ENCODE measurements at regions of chr17 and their contacts with region 1.

Region 1: DNA sequence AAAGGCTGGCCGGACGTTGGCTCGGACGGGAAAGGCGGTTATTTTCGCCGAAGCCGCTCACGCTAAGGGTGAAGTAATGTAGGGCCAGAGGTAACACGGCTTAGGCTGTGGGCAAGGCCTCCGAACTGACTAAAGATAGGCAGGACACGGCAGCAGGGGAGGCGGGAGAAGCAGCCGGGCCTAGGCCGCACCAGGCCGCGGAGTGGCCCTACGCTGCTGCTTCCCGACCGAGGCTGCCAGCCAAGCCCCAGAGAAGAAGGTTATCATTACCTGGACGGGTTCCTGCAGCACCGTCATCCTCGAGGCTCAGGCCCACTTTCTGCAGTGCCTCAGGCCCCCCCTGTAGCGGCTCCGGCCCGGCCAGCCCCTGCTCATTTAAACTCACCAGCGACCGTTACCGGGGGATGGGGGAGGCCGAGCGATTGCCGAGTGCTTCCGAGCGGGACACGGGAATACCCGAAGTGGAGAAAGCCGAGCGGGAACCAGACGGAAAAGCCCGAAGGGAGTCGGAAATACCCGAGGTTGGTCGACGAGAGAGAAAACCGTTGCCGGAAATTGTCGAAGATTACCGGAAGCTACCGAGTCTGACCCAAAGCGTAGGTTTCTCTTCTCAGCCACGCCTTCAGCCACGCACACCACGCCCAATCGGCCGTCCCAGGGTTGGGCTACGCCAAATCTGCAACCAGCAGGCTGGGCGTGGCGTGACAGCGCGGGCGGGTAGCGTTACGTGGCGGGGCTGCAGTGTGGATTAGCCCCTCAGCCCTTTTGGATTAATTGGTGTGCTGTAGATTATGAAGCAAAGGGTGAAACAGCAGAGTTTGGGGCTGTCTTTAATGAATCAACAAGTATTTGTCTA is at the start of gene CDC27:
- DNase-seq: peak; percentile 100
- H3K4me3 Mint-ChIP-seq: peak within 1 kb of the TSS; percentile 84
- H3K27ac Mint-ChIP-seq: peak within 1 kb of the TSS; percentile 91
- H3K4me1 Mint-ChIP-seq: peaks cover 34% of the 10 kb centered on the region
- H3K27me3 Mint-ChIP-seq: no peaks in the 10 kb centered on the region
- total RNA-seq, gene CDC27: 105 to 117 TPM

Region 2: DNA sequence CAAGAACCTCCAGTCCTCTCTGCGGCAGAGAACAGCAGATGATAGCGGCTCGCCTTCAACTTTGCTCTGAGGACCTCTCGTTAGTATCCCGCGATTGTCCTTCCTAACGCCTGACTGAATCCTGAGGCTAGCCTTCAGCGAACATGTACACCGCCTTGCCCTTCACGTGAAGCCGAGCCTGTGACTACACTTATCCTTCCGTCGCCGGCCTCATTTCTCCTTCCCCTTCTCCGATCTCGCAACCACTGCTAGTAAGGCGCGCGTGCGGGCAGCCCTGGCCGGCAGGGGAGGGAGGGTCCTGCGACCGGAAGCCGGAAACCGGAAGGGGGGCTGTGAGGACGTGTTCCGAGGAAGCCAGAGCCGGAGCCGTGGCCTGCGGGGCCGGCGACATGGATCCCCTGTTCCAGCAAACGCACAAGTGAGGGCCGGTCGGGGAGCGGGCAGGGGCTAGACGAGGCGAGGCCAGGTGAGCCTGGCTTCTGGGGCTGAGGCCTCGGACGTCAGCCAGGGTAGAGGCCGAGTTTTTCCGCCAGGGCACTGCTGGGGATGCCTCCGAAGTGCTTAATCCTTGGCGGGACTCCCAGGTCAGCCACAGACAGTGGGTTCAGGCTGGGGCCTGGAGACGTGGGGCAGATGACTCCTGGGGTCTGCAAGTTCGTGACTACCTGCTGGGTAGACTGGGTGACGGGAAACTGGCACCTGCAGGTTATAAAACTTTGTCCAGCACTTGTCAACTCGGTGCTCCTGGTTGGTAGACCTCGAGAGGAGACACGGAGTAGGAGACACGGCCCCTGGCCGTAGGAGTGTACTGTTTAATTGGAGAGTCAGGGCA is 266.1 kb before region 1 on chr17 and contains the start of gene GOSR2:
- CTCF ChIA-PET with region 1: no interaction called
- intact Hi-C with region 1: loop called (anchors 10 kb)
- DNase-seq: peak; percentile 92
- H3K4me3 Mint-ChIP-seq: peak within 1 kb of the TSS; percentile 96
- H3K27ac Mint-ChIP-seq: peak within 1 kb of the TSS; percentile 99
- H3K4me1 Mint-ChIP-seq: peaks cover 49% of the 10 kb centered on the region
- H3K27me3 Mint-ChIP-seq: no peaks in the 10 kb centered on the region
- total RNA-seq, gene GOSR2: 32.8 to 38.1 TPM

Region 3: GRCh38 chr17:47099987-47100711 is 89.0 kb before region 1 on chr17:
- CTCF ChIA-PET with region 1: no interaction called
- intact Hi-C with region 1: loop called (anchors 1 kb)
- DNase-seq: peak; percentile 96
- H3K4me3 Mint-ChIP-seq: peak overlapping the region; percentile 100
- H3K27ac Mint-ChIP-seq: peak overlapping the region; percentile 90
- H3K4me1 Mint-ChIP-seq: peaks cover 16% of the 10 kb centered on the region
- H3K27me3 Mint-ChIP-seq: no peaks in the 10 kb centered on the region

Region 4: DNA sequence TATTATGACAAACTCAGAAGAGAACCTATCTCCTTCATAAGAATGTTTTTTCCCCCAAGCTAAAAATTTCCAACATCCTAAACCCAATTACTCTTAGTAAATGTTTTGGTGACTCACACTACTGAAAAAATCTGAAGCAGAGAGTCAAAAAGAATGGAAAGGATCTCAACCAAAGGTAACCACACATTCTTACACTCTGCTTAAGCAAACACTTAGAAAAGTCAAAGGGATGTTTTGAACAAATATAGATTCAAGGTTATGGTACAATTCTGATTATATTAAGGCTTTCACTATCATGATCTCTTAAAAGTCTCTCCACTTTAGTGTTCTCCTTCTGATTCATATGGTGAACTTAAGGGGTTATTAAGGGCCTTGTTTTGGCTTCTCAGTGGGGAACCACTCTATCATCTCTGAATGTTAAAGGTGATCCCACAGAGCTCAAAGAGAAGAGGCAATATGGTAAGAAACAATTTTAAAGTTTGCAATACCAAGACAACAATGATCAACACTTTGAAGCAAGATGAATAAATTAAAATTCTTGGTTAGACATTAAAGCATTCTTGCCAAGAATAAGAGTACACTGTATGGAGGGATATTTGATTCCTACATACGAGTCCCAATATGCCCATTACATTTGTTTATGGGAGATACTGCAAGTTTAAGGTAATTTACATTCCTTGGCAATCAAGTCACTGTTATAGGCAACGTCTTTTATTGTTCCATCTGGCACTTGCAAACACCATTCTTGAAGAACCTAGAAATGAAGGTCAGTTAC is 69.2 kb before region 1 on chr17:
- CTCF ChIA-PET with region 1: no interaction called
- intact Hi-C with region 1: loop called (anchors 10 kb)
- DNase-seq: no peak
- H3K4me3 Mint-ChIP-seq: no peak overlapping the region
- H3K27ac Mint-ChIP-seq: peak overlapping the region; percentile 42
- H3K4me1 Mint-ChIP-seq: peaks cover 15% of the 10 kb centered on the region
- H3K27me3 Mint-ChIP-seq: no peaks in the 10 kb centered on the region

Region 5: DNA sequence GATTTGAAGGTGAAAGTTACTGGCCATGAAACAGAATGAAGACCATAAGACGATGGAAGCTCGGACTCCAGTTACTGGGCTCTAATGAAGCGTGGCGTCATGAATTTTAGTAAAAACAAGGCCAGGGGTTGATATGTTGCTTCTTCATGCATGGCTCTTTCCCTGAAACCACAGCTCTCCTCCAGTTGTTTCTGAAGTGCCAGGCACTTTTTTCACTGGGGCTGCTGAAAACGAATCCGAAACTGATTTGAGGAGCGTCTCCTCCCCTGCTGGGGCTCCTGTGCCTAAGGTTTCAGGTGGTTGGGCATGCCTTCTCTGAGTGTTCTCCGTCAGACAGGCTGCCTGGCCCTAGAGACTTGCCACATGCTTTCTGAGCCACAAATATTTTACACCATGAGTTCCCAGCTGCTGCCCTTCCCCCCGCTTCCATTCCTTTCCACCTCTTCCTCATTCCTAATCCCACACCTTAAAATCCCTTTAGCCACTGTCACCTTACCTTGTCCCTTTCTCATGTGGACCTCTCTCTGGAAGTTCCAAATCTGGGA is 16.4 kb after region 1 on chr17:
- CTCF ChIA-PET with region 1: interaction called, 3 read pairs
- intact Hi-C with region 1: loop called (anchors 1 kb)
- DNase-seq: peak; percentile 78
- H3K4me3 Mint-ChIP-seq: peak overlapping the region; percentile 51
- H3K27ac Mint-ChIP-seq: peak overlapping the region; percentile 78
- H3K4me1 Mint-ChIP-seq: peaks cover 43% of the 10 kb centered on the region
- H3K27me3 Mint-ChIP-seq: no peaks in the 10 kb centered on the region

Measured in activated naive CD4-positive, alpha-beta T cell treated with anti-CD3 and anti-CD28 coated beads for 36 hours (primary cell).